PC-3 (cell line): ENCODE measurements at regions of chr5 and their contacts with region 1.

Region 1: DNA sequence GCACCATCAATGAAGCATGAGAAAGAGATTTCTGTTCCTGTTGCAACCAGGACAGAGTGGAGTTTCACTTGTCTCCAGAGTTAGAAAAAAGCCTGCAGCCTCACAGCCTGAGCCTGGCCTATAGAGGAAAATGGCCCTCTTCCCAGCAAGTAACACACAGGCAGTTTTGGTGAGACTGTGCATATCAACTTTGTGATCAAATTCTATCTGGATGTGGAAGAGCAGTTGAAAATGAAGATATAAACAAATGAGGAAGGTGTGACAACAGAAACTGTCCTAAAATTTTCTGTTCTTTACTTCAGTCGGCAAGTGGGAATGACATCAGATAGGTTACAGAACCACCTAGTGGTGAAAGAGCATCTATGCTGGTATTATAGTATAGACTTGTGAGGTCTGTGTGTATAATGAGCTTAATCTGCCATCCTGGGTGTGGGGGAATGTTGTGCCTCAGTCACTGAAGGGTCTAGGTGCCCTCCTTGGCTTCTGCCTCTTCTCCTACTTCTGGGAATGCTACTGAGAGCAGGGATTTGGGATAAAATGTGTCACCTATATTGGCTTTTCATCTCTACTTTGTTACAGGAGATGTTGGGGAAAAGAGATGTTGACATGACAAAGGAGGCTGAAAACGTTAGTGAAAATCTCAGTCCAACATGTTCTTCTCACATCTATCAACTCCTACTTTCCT is 28.2 kb downstream of the YIPF5 start:
- DNase-seq: peak; percentile 55
- ATAC-seq: peak; percentile 91
- H3K4me3 ChIP-seq: no peak overlapping the region
- H3K27ac ChIP-seq: no peak overlapping the region
- H3K4me1 ChIP-seq: peaks cover 7% of the 10 kb centered on the region; the same call in 1 of the 2 replicates
- H3K27me3 ChIP-seq: no peaks in the 10 kb centered on the region
- CTCF ChIP-seq: peak; percentile 81

Region 2: GRCh38 chr5:143707806-143708205 is 434.5 kb before region 1 on chr5:
- CTCF ChIA-PET with region 1: no interaction called
- POLR2A ChIA-PET with region 1: no interaction called
- intact Hi-C with region 1: loop called (anchors 10 kb)
- DNase-seq: no peak
- ATAC-seq: no peak
- H3K4me3 ChIP-seq: no peak overlapping the region
- H3K27ac ChIP-seq: no peak overlapping the region
- H3K4me1 ChIP-seq: peaks cover 3% of the 10 kb centered on the region; the same call in 1 of the 2 replicates
- H3K27me3 ChIP-seq: no peaks in the 10 kb centered on the region
- CTCF ChIP-seq: no peak

Region 3: DNA sequence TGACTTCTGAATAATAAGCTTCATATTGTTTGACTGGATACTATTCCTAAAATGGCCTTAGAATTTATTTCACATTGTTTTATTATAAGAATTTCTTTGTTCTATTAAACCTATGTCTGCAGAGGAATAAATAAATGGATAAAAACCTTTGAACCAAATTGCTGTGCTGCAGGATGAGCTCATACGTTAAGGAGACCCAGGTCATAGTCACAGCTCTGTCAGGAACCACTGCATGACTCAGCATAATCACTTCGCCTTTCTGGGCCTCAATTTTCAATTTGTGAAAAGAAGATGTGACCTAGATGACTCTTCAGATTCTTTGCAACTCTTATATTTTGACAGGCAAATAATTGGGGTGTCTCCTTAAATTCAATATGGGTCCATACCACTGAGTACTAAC is 367.0 kb before region 1 on chr5:
- CTCF ChIA-PET with region 1: no interaction called
- POLR2A ChIA-PET with region 1: no interaction called
- intact Hi-C with region 1: no loop called
- DNase-seq: peak; percentile 22
- ATAC-seq: no peak
- H3K4me3 ChIP-seq: no peak overlapping the region
- H3K27ac ChIP-seq: no peak overlapping the region
- H3K4me1 ChIP-seq: no peaks in the 10 kb centered on the region
- H3K27me3 ChIP-seq: no peaks in the 10 kb centered on the region
- CTCF ChIP-seq: no peak

Region 4: GRCh38 chr5:143812085-143812705 is 330.1 kb before region 1 on chr5 and contains the start of gene HMHB1:
- CTCF ChIA-PET with region 1: no interaction called
- POLR2A ChIA-PET with region 1: no interaction called
- intact Hi-C with region 1: no loop called
- DNase-seq: no peak
- ATAC-seq: no peak
- H3K4me3 ChIP-seq: no peak within 1 kb of the TSS
- H3K27ac ChIP-seq: no peak within 1 kb of the TSS
- H3K4me1 ChIP-seq: no peaks in the 10 kb centered on the region
- H3K27me3 ChIP-seq: no peaks in the 10 kb centered on the region
- CTCF ChIP-seq: no peak
- total RNA-seq, gene HMHB1: not detected in 2 replicates

Region 5: DNA sequence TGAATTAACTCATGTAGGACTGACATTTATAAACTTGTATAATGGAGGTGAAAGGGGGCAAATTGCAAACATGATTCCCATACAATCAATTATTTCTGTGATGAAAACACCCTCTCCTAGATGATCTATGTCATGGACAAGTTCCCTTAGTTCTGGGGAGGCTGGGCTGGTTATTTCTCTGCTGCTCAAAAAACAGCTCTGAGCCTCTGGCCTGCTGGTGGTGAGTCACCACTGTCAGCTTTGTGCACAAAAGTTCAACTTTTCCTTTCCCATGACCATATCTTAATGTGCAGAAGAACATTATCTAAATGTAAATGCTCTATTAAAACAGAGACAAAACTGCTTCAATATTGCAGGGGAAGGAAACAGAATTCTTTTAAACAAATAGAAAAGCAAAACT is 245.3 kb before region 1 on chr5:
- CTCF ChIA-PET with region 1: no interaction called
- POLR2A ChIA-PET with region 1: no interaction called
- intact Hi-C with region 1: loop called (anchors 10 kb)
- DNase-seq: peak; percentile 49
- ATAC-seq: peak; percentile 48
- H3K4me3 ChIP-seq: no peak overlapping the region
- H3K27ac ChIP-seq: peak overlapping the region; percentile 73
- H3K4me1 ChIP-seq: peaks cover 36% of the 10 kb centered on the region
- H3K27me3 ChIP-seq: no peaks in the 10 kb centered on the region
- CTCF ChIP-seq: no peak

Region 6: GRCh38 chr5:143923634-143924255 is 218.5 kb before region 1 on chr5:
- CTCF ChIA-PET with region 1: no interaction called
- POLR2A ChIA-PET with region 1: no interaction called
- intact Hi-C with region 1: loop called (anchors 2 kb)
- DNase-seq: peak; percentile 60
- ATAC-seq: peak; percentile 72
- H3K4me3 ChIP-seq: peak overlapping the region; percentile 43; the same call in 1 of the 2 replicates
- H3K27ac ChIP-seq: peak overlapping the region; percentile 95
- H3K4me1 ChIP-seq: peaks cover 53% of the 10 kb centered on the region
- H3K27me3 ChIP-seq: no peaks in the 10 kb centered on the region
- CTCF ChIP-seq: no peak

Region 7: GRCh38 chr5:144191998-144192397 is 49.7 kb after region 1 on chr5:
- CTCF ChIA-PET with region 1: no interaction called
- POLR2A ChIA-PET with region 1: no interaction called
- intact Hi-C with region 1: no loop called
- DNase-seq: peak; percentile 70
- ATAC-seq: peak; percentile 60
- H3K4me3 ChIP-seq: no peak overlapping the region
- H3K27ac ChIP-seq: no peak overlapping the region
- H3K4me1 ChIP-seq: peaks cover 17% of the 10 kb centered on the region
- H3K27me3 ChIP-seq: no peaks in the 10 kb centered on the region
- CTCF ChIP-seq: peak; percentile 62